Cardiac septum (tissue), 1 donor: ENCODE measurements at regions of chr1 and their contacts with region 1.

Region 1: GRCh38 chr1:45803301-45803780 is at the start of gene MAST2:
- DNase-seq: peak; percentile 95
- total RNA-seq, gene MAST2: 81.2 TPM

Region 2: DNA sequence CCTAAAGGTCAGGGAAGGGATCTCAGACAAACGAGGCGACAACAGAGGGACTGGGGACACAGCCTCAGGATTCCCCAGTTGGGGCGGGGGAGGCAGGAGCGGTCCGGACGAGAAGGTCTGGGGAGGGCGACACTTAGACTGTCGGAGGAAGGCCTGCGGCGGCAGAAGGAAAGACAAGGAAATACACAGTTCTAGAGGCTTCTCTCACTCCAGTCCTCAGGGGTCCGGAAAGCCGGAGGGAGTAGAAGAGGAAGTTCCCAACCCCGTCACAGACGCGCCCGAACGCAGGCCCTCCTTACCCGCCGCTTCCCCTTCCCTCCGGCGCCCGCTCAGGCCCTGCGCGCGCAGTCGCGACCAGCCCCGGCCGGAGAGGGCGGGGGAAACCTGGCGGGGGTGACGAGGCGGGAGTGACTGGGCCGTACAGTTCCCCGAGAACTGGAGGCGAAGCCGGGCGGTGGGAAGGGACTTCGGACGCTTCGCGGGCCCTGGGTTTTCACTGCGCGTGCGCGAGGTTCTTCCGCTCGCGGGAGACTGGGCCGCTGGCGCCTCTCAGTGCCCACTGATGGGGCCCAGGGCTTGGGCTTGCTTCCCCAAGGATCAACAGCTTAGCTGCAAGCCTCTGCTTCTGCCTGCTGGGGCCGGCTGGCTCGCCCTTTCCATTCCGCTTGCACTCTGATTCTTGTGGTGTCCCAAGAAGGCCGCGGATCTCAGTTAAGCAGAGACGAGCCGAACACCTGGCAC is 52.9 kb before region 1 on chr1 and contains the start of gene IPP:
- intact Hi-C with region 1: loop called (anchors 2 kb)
- DNase-seq: peak; percentile 99
- total RNA-seq, gene IPP: 17.2 TPM

Region 3: DNA sequence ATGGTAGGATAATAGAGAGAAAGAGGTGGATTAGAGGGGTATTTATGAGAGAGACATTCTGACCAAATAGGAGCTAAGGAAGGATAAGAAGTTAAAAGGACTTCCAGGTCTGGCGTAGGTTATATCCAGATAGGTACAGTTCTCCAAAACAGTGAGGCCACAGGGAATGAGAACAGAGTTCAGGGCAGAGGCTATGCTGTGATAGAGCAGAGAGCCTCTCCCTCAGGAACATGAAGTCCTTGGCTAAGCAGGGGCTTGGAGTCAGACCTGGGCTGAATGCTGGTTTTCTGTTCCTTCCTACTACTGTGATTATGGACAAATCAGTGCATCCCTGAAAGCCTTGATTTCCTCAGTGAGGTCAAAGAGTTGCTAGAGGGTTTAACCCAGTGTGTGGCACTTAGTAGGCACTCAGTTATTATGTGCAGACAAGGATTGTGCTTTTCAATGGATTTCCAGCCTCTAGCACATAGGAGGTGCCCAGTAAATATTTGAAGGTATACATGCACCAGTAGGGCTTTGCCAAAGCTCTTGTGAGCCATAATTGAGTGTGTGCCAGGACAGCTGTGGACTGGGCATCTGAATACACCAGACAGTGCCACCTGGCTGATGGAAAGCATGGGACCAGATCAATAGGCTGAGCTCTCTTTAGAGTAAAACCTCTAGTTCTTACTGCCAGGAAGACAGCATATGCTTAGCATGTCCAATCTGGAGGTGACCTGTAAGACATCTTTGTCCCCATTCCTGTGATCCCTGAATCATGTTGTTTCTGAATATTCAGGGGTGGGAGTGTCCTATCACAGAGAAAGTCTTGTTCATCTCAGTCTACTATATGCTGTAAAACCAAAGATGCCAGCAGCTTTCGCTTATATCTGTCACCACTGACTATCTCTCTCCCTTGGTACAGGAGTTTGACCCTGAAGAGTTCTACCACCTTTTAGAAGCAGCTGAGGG is 218.0 kb after region 1 on chr1:
- intact Hi-C with region 1: loop called (anchors 5 kb)
- DNase-seq: no peak